MCF 10A (cell line): ENCODE measurements at regions of chr13 and their contacts with region 1.

Region 1: GRCh38 chr13:32581177-32581786 is 5.0 kb upstream of the PDS5B start:
- DNase-seq: peak; percentile 27
- H3K4me3 Mint-ChIP-seq: no peak overlapping the region
- H3K27ac Mint-ChIP-seq: no peak overlapping the region
- H3K4me1 Mint-ChIP-seq: peaks cover 8% of the 10 kb centered on the region
- H3K27me3 Mint-ChIP-seq: no peaks in the 10 kb centered on the region
- CTCF ChIP-seq: peak; percentile 36

Region 2: GRCh38 chr13:32545083-32545482 is 36.2 kb before region 1 on chr13:
- CTCF ChIA-PET with region 1: interaction called, 10 read pairs
- POLR2A ChIA-PET with region 1: no interaction called
- intact Hi-C with region 1: no loop called
- DNase-seq: no peak
- H3K4me3 Mint-ChIP-seq: no peak overlapping the region
- H3K27ac Mint-ChIP-seq: no peak overlapping the region
- H3K4me1 Mint-ChIP-seq: no peaks in the 10 kb centered on the region
- H3K27me3 Mint-ChIP-seq: no peaks in the 10 kb centered on the region
- CTCF ChIP-seq: no peak

Region 3: DNA sequence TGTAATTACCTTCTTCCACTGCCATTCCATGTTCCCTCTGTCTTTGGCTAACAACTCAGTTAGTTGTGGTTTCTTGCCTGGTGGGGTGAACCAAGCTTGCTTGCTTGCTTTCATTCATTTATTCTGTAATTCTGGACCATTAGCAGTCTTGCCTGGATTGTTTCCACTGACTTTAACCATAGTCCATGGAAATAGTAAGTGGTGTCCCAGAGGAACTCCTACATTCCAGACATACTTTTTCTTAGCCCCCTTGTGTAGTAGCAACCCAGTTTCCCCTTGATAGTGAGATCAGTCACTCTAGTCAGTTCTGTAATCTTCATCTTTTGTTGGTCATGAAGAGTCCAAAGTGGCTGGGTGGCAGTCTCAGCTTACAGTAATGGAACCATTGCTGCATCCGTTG is 28.1 kb after region 1 on chr13:
- CTCF ChIA-PET with region 1: no interaction called
- POLR2A ChIA-PET with region 1: no interaction called
- intact Hi-C with region 1: no loop called
- DNase-seq: no peak
- H3K4me3 Mint-ChIP-seq: no peak overlapping the region
- H3K27ac Mint-ChIP-seq: no peak overlapping the region
- H3K4me1 Mint-ChIP-seq: peaks cover 6% of the 10 kb centered on the region
- H3K27me3 Mint-ChIP-seq: no peaks in the 10 kb centered on the region
- CTCF ChIP-seq: no peak

Region 4: GRCh38 chr13:32639502-32640105 is 58.3 kb after region 1 on chr13:
- CTCF ChIA-PET with region 1: interaction called, 12 read pairs
- POLR2A ChIA-PET with region 1: interaction called, 10 read pairs
- intact Hi-C with region 1: no loop called
- DNase-seq: peak; percentile 68
- H3K4me3 Mint-ChIP-seq: no peak overlapping the region
- H3K27ac Mint-ChIP-seq: no peak overlapping the region
- H3K4me1 Mint-ChIP-seq: peaks cover 15% of the 10 kb centered on the region
- H3K27me3 Mint-ChIP-seq: no peaks in the 10 kb centered on the region
- CTCF ChIP-seq: peak; percentile 63